ENCODE measurements at regions of chr10 and their contacts with region 1.

Region 1: GRCh38 chr10:60434418-60435046 is 44.9 kb upstream of the ANK3 start:
- DNase-seq: peak in 3 of 10 donors; percentile 38 to 56 (median 53)

Region 2: GRCh38 chr10:60099998-60100747 is 334.4 kb before region 1 on chr10:
- intact Hi-C with region 1: loop called (anchors 2 kb)
- DNase-seq: no peak

Region 3: GRCh38 chr10:60114765-60115586 is 319.6 kb before region 1 on chr10:
- intact Hi-C with region 1: loop called (anchors 5 kb)
- DNase-seq: no peak

Region 4: GRCh38 chr10:60335708-60336107 is 98.8 kb before region 1 on chr10:
- intact Hi-C with region 1: loop called (anchors 2 kb)
- DNase-seq: no peak

Region 5: DNA sequence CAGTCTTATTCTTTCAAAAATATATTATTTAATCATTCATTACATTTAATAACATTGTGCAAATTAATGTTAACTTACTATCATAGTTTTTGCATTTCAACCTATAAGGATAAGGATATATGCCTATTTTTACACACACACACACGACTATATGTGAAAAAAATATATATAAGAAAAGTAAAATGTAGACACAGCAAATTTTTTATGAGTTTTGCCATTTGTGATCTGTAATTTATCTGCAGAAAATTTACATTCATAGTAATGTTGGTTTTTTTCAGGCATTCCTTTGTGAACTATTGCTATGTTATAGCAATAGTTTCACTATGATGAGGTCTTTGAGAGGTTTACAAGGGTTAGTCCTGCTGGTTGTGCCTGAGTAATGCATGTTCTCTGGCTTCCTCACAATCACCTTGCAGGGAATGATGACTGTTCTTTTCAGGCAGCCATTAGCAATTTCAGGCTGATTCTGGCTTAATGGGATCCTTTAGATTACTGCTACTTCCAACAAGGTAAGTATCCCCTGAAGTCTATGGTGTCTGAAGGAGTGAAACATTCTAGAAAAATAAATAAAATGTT is 160.0 kb after region 1 on chr10:
- intact Hi-C with region 1: no loop called
- DNase-seq: no peak

Region 6: DNA sequence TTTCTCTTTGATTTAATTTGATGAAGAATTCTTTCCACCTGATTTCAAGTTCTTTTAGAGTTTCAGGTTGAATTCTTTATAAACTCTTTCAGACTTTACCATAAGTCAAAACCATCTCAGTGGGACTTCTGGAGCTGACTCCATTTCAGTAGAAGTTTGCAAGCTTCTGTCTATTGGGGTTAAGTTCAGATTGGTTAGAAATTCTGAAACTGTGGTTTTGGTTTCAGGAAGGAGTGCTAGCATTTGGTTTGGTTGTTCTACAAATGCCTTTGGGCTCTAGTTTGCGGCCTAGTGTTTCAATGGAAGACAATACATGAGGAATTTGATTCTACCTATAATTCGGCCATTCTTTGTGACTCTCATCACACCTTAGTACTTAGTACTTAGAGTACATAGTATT is 686.3 kb after region 1 on chr10:
- intact Hi-C with region 1: no loop called
- DNase-seq: no peak

Measured in posterior cingulate gyrus (tissue), 11 donors.